CD4-positive, alpha-beta memory T cell (primary cell): ENCODE measurements at regions of chr10 and their contacts with region 1.

Region 1: GRCh38 chr10:69123747-69124562 is at the start of gene VPS26A:
- DNase-seq: peak; percentile 98 to 100 (median 98)
- H3K4me3 ChIP-seq: peak within 1 kb of the TSS; percentile 47 to 81
- H3K4me3 Mint-ChIP-seq: peak within 1 kb of the TSS; percentile 92 to 96 (median 94)
- H3K27ac ChIP-seq: peak within 1 kb of the TSS; percentile 96
- H3K27ac Mint-ChIP-seq: peak within 1 kb of the TSS; percentile 96 to 99 (median 98)
- H3K4me1 ChIP-seq: peaks cover 37% of the 10 kb centered on the region
- H3K4me1 Mint-ChIP-seq: peaks cover 13 to 29% (median 21%) of the 10 kb centered on the region in 4 donors
- H3K27me3 ChIP-seq: no peaks in the 10 kb centered on the region
- H3K27me3 Mint-ChIP-seq: no peaks in the 10 kb centered on the region
- total RNA-seq, gene VPS26A: 31.7 to 35.9 TPM

Region 2: DNA sequence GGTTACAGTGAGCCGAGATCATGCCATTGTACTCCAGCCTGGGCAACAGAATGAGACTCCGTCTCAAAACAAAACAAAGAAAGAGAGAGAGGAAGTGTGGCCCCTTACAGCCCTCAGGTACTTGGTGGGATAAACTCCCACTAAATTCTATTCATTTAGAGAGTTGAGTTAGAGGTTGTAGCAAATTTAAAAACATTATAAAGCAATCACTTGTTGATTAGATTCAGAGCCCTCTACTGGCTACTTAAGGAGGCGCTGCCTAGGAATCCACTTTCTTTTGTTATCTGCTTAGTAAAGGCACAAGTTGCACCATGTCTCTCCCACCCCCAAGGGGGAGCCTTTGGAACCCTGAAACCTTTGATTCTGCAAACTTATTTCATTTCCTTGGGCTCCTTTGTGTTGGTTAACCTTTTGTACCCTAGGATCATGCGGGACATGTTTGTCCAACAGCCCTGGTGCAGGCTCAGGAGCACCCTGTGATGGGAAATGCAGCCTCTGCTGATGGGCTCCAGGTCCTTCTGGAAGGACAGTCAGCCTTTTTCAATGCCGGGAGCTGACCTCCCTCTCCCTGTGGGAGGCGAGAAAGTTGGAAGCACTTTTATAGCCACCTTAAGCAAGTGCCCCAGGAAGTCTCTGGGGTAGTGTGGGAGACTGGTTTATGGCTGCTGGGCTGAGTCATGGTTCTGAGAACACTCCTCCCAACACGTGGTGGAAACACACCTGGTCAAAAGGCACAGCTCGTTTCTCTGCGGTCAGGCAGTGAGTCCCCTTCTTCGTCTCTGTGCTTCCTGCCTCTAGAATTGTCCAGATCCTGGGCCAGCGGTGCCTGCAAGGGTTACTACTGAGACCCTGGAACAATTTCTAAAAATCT is 98.4 kb after region 1 on chr10:
- CTCF ChIA-PET with region 1: no interaction called
- POLR2A ChIA-PET with region 1: interaction called, 3 read pairs
- intact Hi-C with region 1: loop called (anchors 1 kb)
- DNase-seq: peak; percentile 51 to 87 (median 54)
- H3K4me3 ChIP-seq: peak overlapping the region in 1 of 2 donors; percentile 42
- H3K4me3 Mint-ChIP-seq: peak overlapping the region; percentile 41 to 88 (median 76)
- H3K27ac ChIP-seq: peak overlapping the region; percentile 41
- H3K27ac Mint-ChIP-seq: peak overlapping the region; percentile 9 to 96 (median 78)
- H3K4me1 ChIP-seq: peaks cover 45% of the 10 kb centered on the region
- H3K4me1 Mint-ChIP-seq: peaks cover 18 to 46% (median 33%) of the 10 kb centered on the region in 4 donors
- H3K27me3 ChIP-seq: no peaks in the 10 kb centered on the region
- H3K27me3 Mint-ChIP-seq: no peaks in the 10 kb centered on the region